ENCODE measurements at regions of chr5 and their contacts with region 1.

Region 1: DNA sequence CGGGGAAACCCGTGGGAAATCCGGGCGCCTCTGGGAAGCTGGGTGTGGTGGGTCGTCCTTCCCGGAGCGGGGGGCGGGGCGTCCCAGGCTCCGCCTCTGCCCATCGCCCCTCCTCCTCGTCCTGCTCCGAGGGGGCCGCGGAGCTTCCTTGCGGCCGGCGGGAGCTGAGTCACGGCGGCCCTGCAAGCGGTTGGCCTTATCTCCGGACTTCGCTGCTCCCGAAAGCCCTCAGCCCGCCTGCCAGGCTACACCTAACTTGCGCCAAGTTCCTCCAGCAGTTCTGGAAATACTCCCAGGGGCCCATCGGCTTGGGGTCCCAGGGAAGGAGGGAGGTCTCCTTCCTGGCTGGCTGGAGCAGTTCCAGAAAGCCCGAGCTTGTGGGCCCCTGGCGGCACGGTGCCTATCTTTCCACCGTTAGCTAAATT is 54.1 kb upstream of the CDKN2AIPNL start:
- DNase-seq: peak; percentile 89 to 95 (median 93)
- ATAC-seq: peak; percentile 81 to 90 (median 88)
- H3K4me3 ChIP-seq: peak overlapping the region; percentile 4 to 74 (median 60)
- H3K27ac ChIP-seq: peak overlapping the region; percentile 95 to 100 (median 98)
- H3K4me1 ChIP-seq: peaks cover 3 to 41% (median 30%) of the 10 kb centered on the region in 12 donors
- H3K27me3 ChIP-seq: no peaks in the 10 kb centered on the region
- CTCF ChIP-seq: no peak
- POLR2A ChIP-seq: peak in 1 of 2 donors; percentile 81

Region 2: GRCh38 chr5:134176511-134177368 is 289.1 kb before region 1 on chr5 and contains the start of gene SKP1:
- intact Hi-C with region 1: no loop called
- DNase-seq: peak; percentile 82 to 92 (median 87)
- ATAC-seq: peak; percentile 51 to 92 (median 88)
- H3K4me3 ChIP-seq: peak within 1 kb of the TSS; percentile 70 to 99 (median 96)
- H3K27ac ChIP-seq: peak within 1 kb of the TSS; percentile 95 to 100 (median 100)
- H3K4me1 ChIP-seq: peaks cover 3 to 46% (median 22%) of the 10 kb centered on the region in 12 donors
- H3K27me3 ChIP-seq: no peaks in the 10 kb centered on the region
- CTCF ChIP-seq: peak in 1 of 12 donors; percentile 14
- POLR2A ChIP-seq: peak; percentile 51 to 95
- total RNA-seq, gene SKP1: 290 to 533 (median 459) TPM

Region 3: DNA sequence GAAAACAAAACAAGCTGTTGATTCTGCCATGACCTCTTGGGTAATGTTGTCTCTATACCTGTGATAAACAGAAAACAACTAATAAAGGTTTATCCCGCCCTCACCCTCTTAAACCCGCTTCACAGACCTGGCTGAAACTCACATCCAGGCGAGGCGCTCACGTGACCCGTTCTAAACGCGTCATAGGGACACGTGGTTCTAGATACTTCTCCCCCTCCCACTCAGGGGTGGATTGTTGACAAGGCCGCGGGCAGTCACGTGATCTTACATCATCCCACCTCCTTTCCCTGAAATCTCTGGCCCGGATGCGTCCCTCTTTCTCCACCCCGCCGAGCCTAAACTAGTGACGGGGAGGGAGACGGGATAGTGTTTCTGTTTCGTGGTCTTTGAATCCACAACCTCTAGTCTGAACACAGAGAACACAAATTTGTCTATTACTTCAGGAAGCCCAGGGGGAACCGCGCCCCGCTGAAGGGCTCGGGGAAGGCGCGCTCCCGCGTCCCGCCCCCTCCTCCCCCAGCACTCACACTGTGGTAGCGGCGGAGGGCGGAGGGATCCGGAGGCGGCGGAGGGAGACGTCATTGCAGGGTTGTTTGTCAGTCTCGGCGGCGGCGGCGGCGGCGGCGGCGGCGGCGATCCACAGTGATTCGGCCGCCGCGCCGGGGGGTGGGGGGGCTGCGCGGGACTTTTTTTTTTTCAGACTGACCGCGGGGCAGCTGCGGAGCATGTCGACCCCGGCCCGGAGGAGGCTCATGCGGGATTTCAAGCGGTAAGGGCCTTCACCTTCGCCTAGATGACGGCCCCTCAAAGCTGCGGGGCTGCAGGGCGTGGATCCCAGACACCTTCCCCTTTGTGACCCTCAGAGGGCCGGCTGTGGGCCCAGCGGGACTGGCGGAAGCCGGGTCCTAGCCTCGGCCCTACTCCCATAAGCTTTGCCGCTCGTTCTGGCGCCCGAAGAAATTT is 94.7 kb before region 1 on chr5 and contains the start of gene UBE2B:
- intact Hi-C with region 1: loop called in 3 of 10 experiments (anchors 1 to 2 kb)
- DNase-seq: peak; percentile 97 to 99 (median 99)
- ATAC-seq: peak; percentile 92 to 94 (median 92)
- H3K4me3 ChIP-seq: peak within 1 kb of the TSS; percentile 70 to 99 (median 92)
- H3K27ac ChIP-seq: peak within 1 kb of the TSS; percentile 92 to 100 (median 99)
- H3K4me1 ChIP-seq: peaks cover 0 to 55% (median 29%) of the 10 kb centered on the region in 12 donors
- H3K27me3 ChIP-seq: no peaks in the 10 kb centered on the region
- CTCF ChIP-seq: no peak
- POLR2A ChIP-seq: peak in 1 of 2 donors; percentile 55
- total RNA-seq, gene UBE2B: 62.8 to 230 (median 188) TPM

Region 4: DNA sequence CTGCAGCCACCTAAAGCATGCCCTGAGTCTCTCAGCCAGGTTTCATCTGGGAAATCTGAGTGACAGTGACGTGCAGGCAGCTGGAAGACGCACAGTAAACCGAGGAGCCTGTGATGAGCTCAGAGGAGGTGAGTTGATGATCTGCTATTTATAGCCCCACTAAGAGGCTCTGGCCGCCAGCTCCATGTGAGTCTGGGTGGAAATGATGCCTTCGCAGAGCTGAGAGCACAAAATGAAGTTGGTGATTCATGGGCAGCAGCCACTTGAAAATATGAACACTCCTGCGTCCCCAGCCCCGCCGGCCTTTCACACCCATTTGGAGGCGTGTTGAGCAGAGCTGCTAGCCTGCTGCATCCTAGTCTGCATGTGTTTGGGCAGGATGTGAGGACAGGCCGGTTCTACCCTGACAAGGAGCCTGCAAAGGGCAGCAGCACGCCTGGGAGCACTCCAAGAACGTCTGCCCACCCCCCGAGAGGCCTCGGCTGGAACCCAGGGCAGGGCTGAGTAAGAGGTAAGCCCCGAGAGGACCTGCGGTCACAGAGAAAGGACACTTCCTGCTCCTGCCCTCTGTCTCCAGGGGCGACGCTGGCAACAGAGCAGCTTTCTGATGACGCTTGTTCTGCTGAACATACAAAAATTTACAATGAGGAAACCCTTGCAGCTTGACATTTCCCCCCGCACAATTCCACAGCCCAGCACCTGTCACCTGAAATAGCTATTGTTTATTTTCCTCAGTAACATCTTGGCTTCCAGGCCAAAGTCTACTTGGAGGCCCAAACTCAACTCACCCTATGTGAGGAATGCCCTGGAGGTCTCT is 29.1 kb before region 1 on chr5:
- intact Hi-C with region 1: loop called in 4 of 10 experiments (anchors 1 to 2 kb)
- DNase-seq: peak; percentile 46 to 90 (median 73)
- ATAC-seq: peak; percentile 74 to 89 (median 85)
- H3K4me3 ChIP-seq: peak overlapping the region in 5 of 12 donors; percentile 19 to 30 (median 24)
- H3K27ac ChIP-seq: peak overlapping the region; percentile 41 to 95 (median 84)
- H3K4me1 ChIP-seq: peaks cover 18 to 40% (median 37%) of the 10 kb centered on the region in 12 donors
- H3K27me3 ChIP-seq: no peaks in the 10 kb centered on the region
- CTCF ChIP-seq: no peak
- POLR2A ChIP-seq: no peak

Region 5: DNA sequence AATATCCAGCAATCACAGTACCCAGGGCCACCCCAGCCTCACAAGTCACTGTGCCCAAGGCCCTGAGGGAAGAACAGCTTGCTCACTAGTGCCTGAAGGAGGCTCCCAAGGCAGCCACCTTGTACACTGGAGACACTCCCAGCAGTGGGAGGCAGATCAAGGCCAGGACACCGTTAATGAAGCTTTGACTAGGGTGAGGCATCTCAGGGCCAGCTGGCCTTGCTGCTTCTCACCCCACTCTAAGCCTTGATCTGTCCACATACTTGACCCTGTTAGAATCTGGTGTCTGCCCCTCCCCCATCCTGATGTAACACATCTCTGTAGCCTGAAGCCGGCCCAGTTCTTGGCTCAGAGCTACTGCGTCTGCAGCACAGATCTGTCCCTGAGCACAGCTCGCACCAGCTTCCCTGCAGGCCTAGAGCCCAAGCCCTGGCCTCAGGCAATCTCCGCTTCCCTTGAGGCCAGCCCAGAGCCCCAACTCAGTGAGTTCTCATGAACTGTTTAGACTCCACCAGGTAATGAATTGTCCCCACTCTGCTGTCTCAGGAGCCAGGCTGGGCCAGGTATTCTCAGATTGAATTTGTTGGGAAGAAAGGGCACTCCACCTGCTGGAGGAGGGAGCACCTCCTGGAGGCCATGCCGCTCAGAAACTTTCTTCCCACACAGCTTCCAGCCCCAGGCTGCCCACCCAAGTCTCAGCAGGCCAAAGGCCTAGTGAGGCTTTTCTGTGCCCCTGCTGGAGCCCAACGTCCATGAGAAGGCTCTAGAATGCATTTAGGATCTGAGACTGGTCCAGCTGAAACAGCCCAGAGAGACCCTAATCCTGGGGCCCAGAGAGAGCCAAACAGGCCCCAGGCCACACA is 46.2 kb after region 1 on chr5:
- intact Hi-C with region 1: loop called in 5 of 10 experiments (anchors 2 to 5 kb)
- DNase-seq: peak; percentile 73 to 90 (median 79)
- ATAC-seq: peak; percentile 71 to 93 (median 90)
- H3K4me3 ChIP-seq: no peak overlapping the region
- H3K27ac ChIP-seq: peak overlapping the region in 11 of 12 donors; percentile 7 to 74 (median 61)
- H3K4me1 ChIP-seq: peaks cover 0 to 23% (median 14%) of the 10 kb centered on the region in 12 donors
- H3K27me3 ChIP-seq: no peaks in the 10 kb centered on the region
- CTCF ChIP-seq: peak in 9 of 12 donors; percentile 8 to 49 (median 22)
- POLR2A ChIP-seq: no peak

Region 6: GRCh38 chr5:134577796-134578363 is 112.1 kb after region 1 on chr5:
- intact Hi-C with region 1: loop called in 1 of 10 experiments (anchors 2 kb)
- DNase-seq: peak; percentile 71 to 89 (median 77)
- ATAC-seq: peak in 3 of 4 donors; percentile 30 to 53 (median 51)
- H3K4me3 ChIP-seq: no peak overlapping the region
- H3K27ac ChIP-seq: peak overlapping the region in 2 of 12 donors; percentile 20 to 30
- H3K4me1 ChIP-seq: peaks cover 0 to 55% (median 33%) of the 10 kb centered on the region in 12 donors
- H3K27me3 ChIP-seq: no peaks in the 10 kb centered on the region
- CTCF ChIP-seq: peak; percentile 73 to 89 (median 84)
- POLR2A ChIP-seq: no peak